Spleen (tissue), 13 donors: ENCODE measurements at regions of chr1 and their contacts with region 1.

Region 1: GRCh38 chr1:58883037-58883887 is 99.4 kb upstream of the JUN start:
- DNase-seq: peak; percentile 83
- H3K4me3 ChIP-seq: peak overlapping the region in 1 of 8 donors; percentile 42
- H3K27ac ChIP-seq: peak overlapping the region; percentile 55 to 90 (median 82)
- H3K4me1 ChIP-seq: peaks cover 18 to 62% (median 32%) of the 10 kb centered on the region in 6 donors
- H3K27me3 ChIP-seq: no peaks in the 10 kb centered on the region
- CTCF ChIP-seq: no peak
- POLR2A ChIP-seq: no peak

Region 2: DNA sequence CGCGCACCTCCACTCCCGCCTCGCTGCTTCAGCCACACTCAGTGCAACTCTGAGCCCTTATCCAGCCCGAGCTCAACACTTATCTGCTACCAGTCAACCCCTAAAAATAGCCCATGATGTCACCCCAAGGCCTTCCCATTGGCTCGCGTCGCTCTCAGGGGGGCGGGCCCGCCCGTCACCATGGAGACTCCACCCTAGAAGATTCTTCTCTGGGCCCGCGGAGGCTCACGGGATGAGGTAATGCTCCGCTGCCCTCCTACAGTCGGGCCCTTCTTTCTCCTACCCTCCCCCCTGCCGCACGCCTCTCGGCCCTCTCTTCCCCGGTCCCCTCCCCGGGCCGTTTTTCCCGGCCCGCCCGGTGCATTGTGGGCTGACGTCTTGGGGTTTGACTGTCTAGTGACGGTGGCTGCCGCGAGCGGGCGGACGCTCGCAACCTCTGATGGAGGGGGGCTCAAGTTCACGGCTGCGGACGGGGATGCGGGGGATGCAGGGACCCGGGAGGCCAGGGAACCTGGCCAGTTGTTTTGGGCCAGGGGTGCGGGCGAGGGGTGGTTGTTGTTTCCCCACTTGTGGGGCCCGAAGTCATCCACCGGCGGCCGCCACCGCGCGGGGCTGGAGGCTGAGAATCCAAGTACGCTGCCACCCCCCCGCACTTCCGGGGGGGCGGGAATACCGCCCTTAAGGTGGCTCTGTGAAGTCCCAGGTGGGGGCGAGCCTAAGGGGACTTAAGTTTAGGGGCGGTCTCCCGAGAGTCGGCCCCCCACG is 99.1 kb before region 1 on chr1 and contains the start of gene JUN:
- intact Hi-C with region 1: loop called (anchors 10 kb)
- DNase-seq: peak; percentile 99
- H3K4me3 ChIP-seq: peak within 1 kb of the TSS; percentile 57 to 88 (median 69)
- H3K27ac ChIP-seq: peak within 1 kb of the TSS; percentile 98 to 99 (median 99)
- H3K4me1 ChIP-seq: peaks cover 0 to 52% (median 35%) of the 10 kb centered on the region in 6 donors
- H3K27me3 ChIP-seq: peaks cover 0 to 9% (median 0%) of the 10 kb centered on the region in 7 donors
- CTCF ChIP-seq: peak in 3 of 11 experiments; percentile 12 to 27 (median 15)
- POLR2A ChIP-seq: peak; percentile 99 to 100 (median 99)
- total RNA-seq, gene JUN: 33.7 to 162 (median 60.3) TPM

Region 3: GRCh38 chr1:58950897-58951296 is 67.6 kb after region 1 on chr1:
- intact Hi-C with region 1: no loop called
- DNase-seq: no peak
- H3K4me3 ChIP-seq: no peak overlapping the region
- H3K27ac ChIP-seq: no peak overlapping the region
- H3K4me1 ChIP-seq: no peaks in the 10 kb centered on the region
- H3K27me3 ChIP-seq: no peaks in the 10 kb centered on the region
- CTCF ChIP-seq: no peak
- POLR2A ChIP-seq: no peak